ENCODE measurements at regions of chr1 and their contacts with region 1.

Region 1: DNA sequence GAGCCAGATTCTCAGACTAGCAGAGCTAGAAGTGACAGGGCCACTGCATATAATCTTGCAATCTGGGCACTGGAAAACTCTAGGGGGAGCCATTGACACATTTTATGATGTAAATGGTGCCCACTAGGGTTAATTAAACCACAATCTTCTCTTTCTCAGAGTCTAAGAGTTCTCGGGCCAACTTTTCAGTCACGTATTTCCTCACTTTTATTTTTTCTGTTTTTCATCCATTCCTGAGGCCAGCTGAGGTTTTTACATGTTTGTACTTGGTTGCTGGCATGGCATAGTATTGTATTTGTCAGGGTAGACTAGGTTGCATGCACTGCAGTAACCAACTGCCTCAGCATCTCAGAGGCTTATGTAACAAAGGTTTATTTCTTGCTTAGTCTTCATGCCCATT is 138.2 kb downstream of the ZNF326 start:
- DNase-seq: peak; percentile 35
- H3K4me3 ChIP-seq: no peak overlapping the region
- H3K27ac ChIP-seq: no peak overlapping the region
- H3K4me1 ChIP-seq: no peaks in the 10 kb centered on the region
- H3K27me3 ChIP-seq: no peaks in the 10 kb centered on the region
- CTCF ChIP-seq: peak; percentile 19 to 36
- POLR2A ChIP-seq: no peak

Region 2: GRCh38 chr1:90579212-90579802 is 446.2 kb after region 1 on chr1:
- CTCF ChIA-PET with region 1: interaction called, 5 read pairs
- POLR2A ChIA-PET with region 1: no interaction called
- dilution Hi-C with region 1: no loop called
- intact Hi-C with region 1: loop called (anchors 10 kb)
- DNase-seq: peak; percentile 51
- H3K4me3 ChIP-seq: no peak overlapping the region
- H3K27ac ChIP-seq: no peak overlapping the region
- H3K4me1 ChIP-seq: no peaks in the 10 kb centered on the region
- H3K27me3 ChIP-seq: no peaks in the 10 kb centered on the region
- CTCF ChIP-seq: peak; percentile 36 to 46
- POLR2A ChIP-seq: no peak

Region 3: GRCh38 chr1:91021686-91022517 is 888.8 kb after region 1 on chr1 and contains the start of gene ZNF644:
- CTCF ChIA-PET with region 1: interaction called, 12 read pairs
- POLR2A ChIA-PET with region 1: no interaction called
- dilution Hi-C with region 1: no loop called
- intact Hi-C with region 1: no loop called
- DNase-seq: peak; percentile 84
- H3K4me3 ChIP-seq: peak within 1 kb of the TSS; percentile 72 to 99 (median 96)
- H3K27ac ChIP-seq: peak within 1 kb of the TSS; percentile 97
- H3K4me1 ChIP-seq: peaks cover 19% of the 10 kb centered on the region
- H3K27me3 ChIP-seq: no peaks in the 10 kb centered on the region
- CTCF ChIP-seq: no peak
- POLR2A ChIP-seq: peak; percentile 53
- total RNA-seq, gene ZNF644: 38.7 and 47.0 TPM in 2 replicates